ENCODE measurements at regions of chr6 and their contacts with region 1.

Region 1: GRCh38 chr6:37791156-37791919 is 28.2 kb upstream of the ZFAND3 start:
- DNase-seq: peak; percentile 87 to 88
- H3K4me3 ChIP-seq: peak overlapping the region in 1 of 4 experiments; percentile 11; a peak in 2 of 8 replicates
- H3K27ac ChIP-seq: no peak overlapping the region
- H3K4me1 ChIP-seq: peaks cover 0 to 6% (median 4%) of the 10 kb centered on the region in 4 experiments; a peak in 5 of 7 replicates
- H3K27me3 ChIP-seq: no peaks in the 10 kb centered on the region
- CTCF ChIP-seq: peak; percentile 81 to 91 (median 89)
- EP300 ChIP-seq: peak in 1 of 2 experiments; percentile 55; a peak in 1 of 3 replicates
- POLR2A ChIP-seq: no peak
- RAD21 ChIP-seq: peak; percentile 85

Region 2: DNA sequence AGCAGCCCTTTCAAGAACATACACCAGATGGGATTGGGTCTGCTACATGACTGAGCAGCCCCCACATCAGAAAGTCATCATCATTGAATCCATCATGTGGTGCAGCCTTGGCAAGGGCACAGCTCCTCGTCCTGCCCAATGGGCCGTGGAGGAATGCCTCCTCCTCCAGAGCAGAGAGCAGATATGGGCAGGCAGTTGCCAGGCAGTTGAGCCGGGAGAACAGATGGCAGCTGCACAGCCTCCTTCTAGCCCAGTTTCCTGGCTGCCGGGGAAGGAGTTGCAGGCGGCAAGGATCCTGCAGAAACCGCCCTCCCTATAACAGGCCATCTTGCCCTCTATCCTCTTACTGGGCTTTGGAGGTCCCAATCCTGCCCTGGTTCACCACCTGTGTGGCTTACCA is 16.3 kb after region 1 on chr6:
- CTCF ChIA-PET with region 1: interaction called, 15 read pairs
- POLR2A ChIA-PET with region 1: interaction called, 4 read pairs
- DNase-seq: no peak
- H3K4me3 ChIP-seq: no peak overlapping the region
- H3K27ac ChIP-seq: no peak overlapping the region
- H3K4me1 ChIP-seq: peaks cover 0 to 6% (median 0%) of the 10 kb centered on the region in 4 experiments; a peak in 2 of 7 replicates
- H3K27me3 ChIP-seq: no peaks in the 10 kb centered on the region
- CTCF ChIP-seq: peak in 2 of 3 experiments; percentile 17 to 18; a peak in 2 of 4 replicates
- EP300 ChIP-seq: no peak
- POLR2A ChIP-seq: no peak
- RAD21 ChIP-seq: no peak

Region 3: GRCh38 chr6:37860226-37860839 is 69.0 kb after region 1 on chr6:
- CTCF ChIA-PET with region 1: interaction called, 13 read pairs
- POLR2A ChIA-PET with region 1: no interaction called
- DNase-seq: no peak
- H3K4me3 ChIP-seq: no peak overlapping the region
- H3K27ac ChIP-seq: no peak overlapping the region
- H3K4me1 ChIP-seq: no peaks in the 10 kb centered on the region
- H3K27me3 ChIP-seq: no peaks in the 10 kb centered on the region
- CTCF ChIP-seq: peak in 1 of 3 experiments; percentile 45; a peak in 1 of 4 replicates
- EP300 ChIP-seq: no peak
- POLR2A ChIP-seq: no peak
- RAD21 ChIP-seq: peak in 1 of 2 experiments; percentile 20; a peak in 2 of 4 replicates

Measured in H1 (cell line).